ENCODE measurements at regions of chr22 and their contacts with region 1.

Region 1: DNA sequence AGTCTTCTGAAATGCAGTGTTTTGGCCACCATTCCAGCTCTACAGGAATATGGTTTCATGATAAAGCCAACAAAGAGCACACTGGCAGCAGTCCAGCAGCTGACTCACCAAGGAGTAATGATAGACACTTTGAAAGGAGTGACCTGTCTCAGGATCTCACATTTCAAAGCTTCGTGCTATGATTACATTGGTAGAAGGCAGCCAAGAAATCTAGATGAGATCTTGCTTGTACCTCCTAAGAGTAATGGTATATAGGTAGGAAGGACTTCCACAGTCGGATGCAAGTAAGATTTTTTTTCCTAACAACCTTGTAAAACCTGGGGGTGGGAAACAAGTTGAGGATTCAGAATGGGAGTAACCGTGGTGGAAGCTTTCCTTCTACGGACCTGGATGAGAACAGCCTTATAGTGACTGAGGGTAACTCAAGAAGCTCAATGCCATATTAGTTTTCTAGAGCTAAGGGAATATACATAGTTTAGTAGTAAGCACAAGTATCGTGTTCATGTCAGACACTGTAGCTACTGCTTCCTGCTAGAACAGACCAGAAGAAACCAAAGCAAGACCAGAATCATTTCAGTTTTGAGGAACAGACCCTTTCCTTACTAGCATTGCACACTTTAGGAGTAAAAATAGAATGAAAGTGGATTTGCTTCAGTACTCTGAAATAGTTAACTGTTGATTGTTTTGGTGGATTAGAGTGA is 25.0 kb downstream of the MTMR3 start:
- DNase-seq: peak in 3 of 35 experiments; percentile 7 to 35 (median 9)
- ATAC-seq: no peak
- H3K4me3 ChIP-seq: no peak overlapping the region
- H3K4me3 Mint-ChIP-seq: no peak overlapping the region
- H3K27ac ChIP-seq: no peak overlapping the region
- H3K27ac Mint-ChIP-seq: no peak overlapping the region
- H3K4me1 ChIP-seq: peaks cover 0 to 9% of the 10 kb centered on the region in 2 experiments
- H3K4me1 Mint-ChIP-seq: peaks cover 62 to 70% (median 68%) of the 10 kb centered on the region in 3 donors
- H3K27me3 ChIP-seq: no peaks in the 10 kb centered on the region
- H3K27me3 Mint-ChIP-seq: no peaks in the 10 kb centered on the region

Region 2: DNA sequence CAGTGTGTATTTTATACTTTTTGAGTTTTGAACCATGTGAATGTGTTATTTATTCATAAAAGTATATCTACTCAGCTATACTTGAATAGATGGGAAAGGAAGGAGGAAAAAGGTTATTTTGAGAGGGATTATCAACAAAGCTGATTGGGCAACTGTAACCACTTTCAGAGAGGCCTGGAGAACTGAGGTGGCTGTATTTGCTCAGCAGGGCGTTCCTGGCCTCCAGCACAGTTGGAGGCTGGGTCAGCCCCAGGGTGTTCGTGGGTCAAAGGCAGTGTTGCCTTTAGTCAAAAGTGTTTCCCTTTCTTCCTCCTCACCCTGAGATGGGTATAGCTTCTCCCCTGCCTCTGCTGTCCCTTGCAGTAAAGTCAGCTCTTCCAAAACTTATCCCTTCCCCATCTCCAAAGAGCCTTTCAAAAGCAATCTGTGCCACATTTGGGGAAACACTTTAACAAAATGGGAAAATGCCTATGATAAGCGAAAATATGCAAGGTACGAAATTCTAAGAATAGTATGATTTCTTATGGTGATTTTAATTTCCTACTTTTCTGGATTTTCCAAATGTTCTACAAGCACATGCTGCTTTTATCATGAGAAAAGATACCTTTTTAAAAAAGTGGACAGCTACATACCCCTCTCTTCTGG is 96.5 kb before region 1 on chr22:
- CTCF ChIA-PET with region 1: no interaction called
- POLR2A ChIA-PET with region 1: interaction called in 1 of 2 experiments, 15 read pairs
- DNase-seq: no peak
- ATAC-seq: no peak
- H3K4me3 ChIP-seq: no peak overlapping the region
- H3K4me3 Mint-ChIP-seq: no peak overlapping the region
- H3K27ac ChIP-seq: no peak overlapping the region
- H3K27ac Mint-ChIP-seq: no peak overlapping the region
- H3K4me1 ChIP-seq: no peaks in the 10 kb centered on the region
- H3K4me1 Mint-ChIP-seq: no peaks in the 10 kb centered on the region
- H3K27me3 ChIP-seq: no peaks in the 10 kb centered on the region
- H3K27me3 Mint-ChIP-seq: no peaks in the 10 kb centered on the region

Region 3: DNA sequence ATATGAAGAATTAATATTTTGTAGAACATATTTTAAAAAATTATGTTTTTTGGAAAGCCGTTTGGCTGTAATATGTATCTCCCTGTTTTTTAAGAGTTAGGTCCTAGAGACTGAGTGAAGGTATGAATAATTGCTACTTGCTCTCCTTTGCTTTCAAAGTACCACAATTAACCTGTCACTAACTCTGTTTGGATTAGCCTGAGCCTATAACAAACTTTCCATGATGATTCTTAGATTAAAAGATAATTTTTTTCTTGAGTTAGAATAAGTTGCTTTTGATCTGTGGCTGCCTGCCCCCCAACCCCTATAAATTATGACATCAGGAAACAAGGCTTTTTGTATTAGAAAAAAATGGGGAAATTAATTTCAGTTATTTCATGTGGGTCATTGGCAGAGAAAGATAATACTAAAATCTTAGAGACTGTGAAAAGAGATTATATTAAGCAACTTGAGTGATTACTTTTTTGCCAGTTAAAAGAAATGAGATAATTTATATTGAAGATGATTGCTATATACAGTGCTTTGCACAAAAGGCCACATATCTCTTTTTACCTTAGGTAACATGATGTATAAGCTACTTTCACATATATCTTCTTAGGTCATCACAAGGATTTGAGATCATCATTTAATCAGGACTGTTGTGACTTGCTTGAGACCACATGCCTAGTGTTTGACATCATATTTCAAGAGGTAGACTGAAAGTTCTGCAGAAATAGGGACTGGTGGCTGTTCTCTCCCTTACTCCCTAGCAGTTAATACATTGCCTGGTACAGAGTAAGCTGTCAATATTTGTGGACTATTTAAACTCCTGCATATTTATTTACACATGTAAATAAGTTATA is 15.4 kb before region 1 on chr22:
- CTCF ChIA-PET with region 1: no interaction called
- POLR2A ChIA-PET with region 1: no interaction called
- DNase-seq: no peak
- ATAC-seq: no peak
- H3K4me3 ChIP-seq: no peak overlapping the region
- H3K4me3 Mint-ChIP-seq: no peak overlapping the region
- H3K27ac ChIP-seq: no peak overlapping the region
- H3K27ac Mint-ChIP-seq: no peak overlapping the region
- H3K4me1 ChIP-seq: peaks cover 0 to 3% of the 10 kb centered on the region in 2 experiments
- H3K4me1 Mint-ChIP-seq: peaks cover 47 to 53% (median 51%) of the 10 kb centered on the region in 3 donors
- H3K27me3 ChIP-seq: no peaks in the 10 kb centered on the region
- H3K27me3 Mint-ChIP-seq: no peaks in the 10 kb centered on the region

Region 4: GRCh38 chr22:30079952-30080533 is 172.1 kb after region 1 on chr22 and contains the start of gene HORMAD2:
- CTCF ChIA-PET with region 1: no interaction called
- POLR2A ChIA-PET with region 1: no interaction called
- DNase-seq: no peak
- ATAC-seq: no peak
- H3K4me3 ChIP-seq: no peak within 1 kb of the TSS
- H3K4me3 Mint-ChIP-seq: no peak within 1 kb of the TSS
- H3K27ac ChIP-seq: no peak within 1 kb of the TSS
- H3K27ac Mint-ChIP-seq: no peak within 1 kb of the TSS
- H3K4me1 ChIP-seq: peaks cover 0 to 24% of the 10 kb centered on the region in 2 experiments
- H3K4me1 Mint-ChIP-seq: peaks cover 10 to 15% (median 15%) of the 10 kb centered on the region in 3 donors
- H3K27me3 ChIP-seq: no peaks in the 10 kb centered on the region
- H3K27me3 Mint-ChIP-seq: peaks cover 0 to 9% of the 10 kb centered on the region in 2 donors
- total RNA-seq, gene HORMAD2: not detected